ENCODE measurements at regions of chr6 and their contacts with region 1.

Region 1: DNA sequence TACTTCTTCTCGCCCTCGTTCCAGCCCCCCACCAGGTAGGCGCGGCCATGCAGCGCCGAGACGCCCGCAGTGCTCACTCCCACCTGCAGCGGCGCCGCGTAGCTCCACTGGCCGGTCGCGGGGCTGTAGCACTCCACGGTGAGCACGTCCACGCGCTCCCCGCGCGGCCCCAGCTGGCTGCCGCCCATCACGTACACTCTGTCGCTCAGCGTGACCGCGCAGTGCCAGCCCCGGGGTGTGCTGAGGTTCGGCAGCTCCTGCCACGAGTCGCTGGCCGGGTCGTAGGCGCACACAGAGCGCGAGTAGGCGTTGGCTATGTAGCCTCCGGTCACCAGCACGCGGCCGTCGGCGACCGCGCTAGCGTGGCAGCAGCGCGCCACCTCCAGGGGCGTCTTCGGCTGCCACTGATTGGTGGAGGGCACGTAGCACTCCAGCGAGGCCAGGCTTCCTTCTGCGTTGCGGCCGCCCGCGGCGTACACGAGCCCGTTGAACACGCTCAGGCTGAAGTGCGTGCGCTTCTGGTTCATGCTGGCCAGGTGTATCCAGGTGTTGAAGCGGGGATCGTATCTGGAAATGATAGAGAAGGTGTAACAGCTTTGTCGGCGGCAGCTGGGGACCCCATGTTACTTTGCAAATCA is 13.7 kb downstream of the KLHL31 start:
- DNase-seq: peak; percentile 38 to 68 (median 52)
- H3K4me3 ChIP-seq: peak overlapping the region; percentile 47
- H3K27ac ChIP-seq: no peak overlapping the region
- H3K4me1 ChIP-seq: peaks cover 7% of the 10 kb centered on the region
- H3K27me3 ChIP-seq: no peaks in the 10 kb centered on the region
- CTCF ChIP-seq: peak in 1 of 3 donors; percentile 16
- EP300 ChIP-seq: no peak
- POLR2A ChIP-seq: no peak

Region 2: GRCh38 chr6:53517056-53517455 is 134.8 kb before region 1 on chr6:
- intact Hi-C with region 1: loop called in 2 of 4 experiments (anchors 10 kb)
- DNase-seq: peak in 4 of 5 donors; percentile 48 to 68 (median 56)
- H3K4me3 ChIP-seq: no peak overlapping the region
- H3K27ac ChIP-seq: no peak overlapping the region
- H3K4me1 ChIP-seq: no peaks in the 10 kb centered on the region
- H3K27me3 ChIP-seq: no peaks in the 10 kb centered on the region
- CTCF ChIP-seq: no peak
- EP300 ChIP-seq: no peak
- POLR2A ChIP-seq: no peak

Region 3: GRCh38 chr6:53544470-53545308 is 107.2 kb before region 1 on chr6 and contains the start of gene GCLC:
- intact Hi-C with region 1: loop called in 2 of 4 experiments (anchors 5 kb)
- DNase-seq: peak; percentile 93 to 96 (median 94)
- H3K4me3 ChIP-seq: peak within 1 kb of the TSS; percentile 81
- H3K27ac ChIP-seq: peak within 1 kb of the TSS; percentile 67 to 89
- H3K4me1 ChIP-seq: peaks cover 3% of the 10 kb centered on the region
- H3K27me3 ChIP-seq: no peaks in the 10 kb centered on the region
- CTCF ChIP-seq: peak; percentile 35 to 78 (median 66)
- EP300 ChIP-seq: no peak
- POLR2A ChIP-seq: peak; percentile 91
- total RNA-seq, gene GCLC: 17.8 to 42.8 (median 29.4) TPM

Region 4: DNA sequence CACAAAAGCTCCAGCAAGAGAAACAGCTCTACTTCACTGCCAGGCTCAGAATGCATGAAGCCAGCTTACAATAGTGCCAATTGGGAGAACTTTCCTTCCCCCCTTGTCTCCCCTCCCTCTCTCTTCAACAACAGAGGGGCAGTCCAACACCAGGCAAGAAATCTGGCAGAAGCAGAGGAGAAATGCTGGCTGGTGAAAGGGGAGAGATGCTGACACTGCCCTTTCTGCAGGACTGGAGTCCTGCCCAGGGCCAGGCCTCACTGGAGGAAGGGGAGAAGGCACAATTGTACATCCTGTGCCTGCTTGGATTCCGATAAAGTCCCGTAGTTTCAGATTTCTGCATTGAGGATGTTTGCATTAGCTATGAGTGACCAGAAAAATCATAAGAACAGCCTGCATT is 291.5 kb after region 1 on chr6:
- intact Hi-C with region 1: loop called in 1 of 4 experiments (anchors 5 kb)
- DNase-seq: peak in 4 of 5 donors; percentile 40 to 74 (median 50)
- H3K4me3 ChIP-seq: no peak overlapping the region
- H3K27ac ChIP-seq: no peak overlapping the region
- H3K4me1 ChIP-seq: peaks cover 7% of the 10 kb centered on the region
- H3K27me3 ChIP-seq: no peaks in the 10 kb centered on the region
- CTCF ChIP-seq: no peak
- EP300 ChIP-seq: no peak
- POLR2A ChIP-seq: no peak

Region 5: DNA sequence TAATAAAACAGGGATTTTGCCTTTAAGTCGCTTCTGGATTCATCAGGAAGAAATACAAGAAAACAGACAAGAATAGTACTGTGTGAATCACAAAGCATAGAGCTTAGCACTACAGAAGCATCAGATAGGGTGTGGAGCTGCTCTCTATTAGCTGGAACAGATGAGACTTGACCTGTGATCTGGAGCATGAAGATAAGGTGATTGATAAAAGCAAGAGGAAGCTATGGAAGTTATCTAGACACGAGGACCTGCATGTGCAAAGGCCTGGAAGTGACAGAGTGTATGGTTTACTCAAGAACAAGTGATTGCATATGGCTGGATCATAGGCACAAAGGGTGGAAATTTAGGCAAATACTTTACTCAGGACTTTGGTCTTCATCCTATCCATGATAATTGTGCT is 346.4 kb after region 1 on chr6:
- intact Hi-C with region 1: no loop called
- DNase-seq: no peak
- H3K4me3 ChIP-seq: no peak overlapping the region
- H3K27ac ChIP-seq: no peak overlapping the region
- H3K4me1 ChIP-seq: no peaks in the 10 kb centered on the region
- H3K27me3 ChIP-seq: no peaks in the 10 kb centered on the region
- CTCF ChIP-seq: no peak
- EP300 ChIP-seq: no peak
- POLR2A ChIP-seq: no peak

Region 6: DNA sequence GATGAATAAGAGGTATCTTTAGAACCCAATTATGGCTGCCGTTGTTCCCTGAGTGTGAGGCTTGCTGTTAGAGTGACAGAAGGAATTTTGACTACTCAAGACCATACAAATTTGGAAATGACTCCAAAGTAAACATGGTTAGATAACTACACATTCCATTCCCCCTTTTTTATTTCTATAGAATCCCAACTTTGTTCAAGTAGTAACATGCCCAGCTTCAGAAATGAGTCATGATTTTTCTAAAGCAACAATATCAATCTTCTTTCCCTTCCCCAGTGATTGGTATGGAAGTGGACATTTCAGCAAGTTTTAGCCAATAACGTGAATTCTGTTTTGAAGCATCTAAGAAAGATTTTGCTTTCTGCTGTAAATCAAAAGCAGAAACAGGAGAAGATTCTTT is 1560.3 kb after region 1 on chr6:
- intact Hi-C with region 1: no loop called
- DNase-seq: no peak
- H3K4me3 ChIP-seq: no peak overlapping the region
- H3K27ac ChIP-seq: no peak overlapping the region
- H3K4me1 ChIP-seq: no peaks in the 10 kb centered on the region
- H3K27me3 ChIP-seq: no peaks in the 10 kb centered on the region
- CTCF ChIP-seq: no peak
- EP300 ChIP-seq: no peak
- POLR2A ChIP-seq: no peak

Measured in ovary (tissue), 10 donors.